A549 (cell line): ENCODE measurements at regions of chr9 and their contacts with region 1.

Region 1: DNA sequence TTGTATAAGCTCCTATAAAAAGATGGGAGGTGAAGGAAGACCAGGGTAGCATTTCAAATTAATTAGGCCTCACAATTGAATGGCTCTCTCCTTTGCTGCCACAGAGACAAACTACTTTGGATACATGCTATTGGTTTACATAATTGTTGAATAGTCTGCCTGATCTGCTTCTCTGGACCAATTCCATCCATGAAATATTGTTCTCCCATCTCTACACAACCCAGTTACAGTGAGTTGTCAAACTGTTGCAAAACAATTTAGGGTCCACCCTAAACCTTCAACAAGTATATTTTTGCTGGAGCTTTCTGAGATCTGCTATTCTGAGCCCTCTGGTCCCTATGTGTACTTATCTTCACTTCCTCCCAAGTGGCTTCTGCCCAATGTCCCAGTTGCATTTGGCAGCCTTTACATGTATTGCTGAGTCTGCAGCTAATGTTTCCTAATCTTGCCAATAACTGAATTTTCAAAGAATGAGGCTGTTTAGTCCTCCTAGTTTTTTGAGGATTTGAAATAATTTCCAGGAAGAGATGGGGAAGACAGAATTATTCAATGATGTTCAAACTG is 38.9 kb downstream of the AGTPBP1 start:
- DNase-seq: no peak
- ATAC-seq: no peak
- H3K4me3 ChIP-seq: no peak overlapping the region
- H3K27ac ChIP-seq: no peak overlapping the region
- H3K4me1 ChIP-seq: peaks cover 3% of the 10 kb centered on the region; the same call in 1 of the 3 replicates
- CTCF ChIP-seq: no peak
- EP300 ChIP-seq: no peak
- POLR2A ChIP-seq: no peak
- RAD21 ChIP-seq: no peak

Region 2: DNA sequence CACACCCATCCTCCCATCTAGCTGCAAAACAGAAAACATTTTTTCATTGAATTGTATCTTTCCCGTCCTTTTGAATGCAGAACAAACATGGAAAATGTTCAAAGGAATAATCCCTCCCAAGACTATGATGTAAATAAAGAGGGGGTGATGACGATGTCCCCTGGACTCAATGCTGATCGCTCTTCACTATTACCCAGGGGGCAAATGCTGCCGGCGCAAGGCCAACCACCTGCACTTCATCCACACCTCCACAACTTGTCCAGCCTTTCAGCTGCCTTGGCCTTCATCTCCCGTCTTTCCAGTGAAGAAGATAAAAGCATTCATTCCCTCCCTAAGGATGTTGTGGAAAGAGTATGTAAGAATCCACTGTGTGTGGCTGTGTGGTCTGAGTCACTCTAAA is 201.4 kb before region 1 on chr9:
- CTCF ChIA-PET with region 1: no interaction called
- POLR2A ChIA-PET with region 1: no interaction called
- DNase-seq: no peak
- ATAC-seq: no peak
- H3K4me3 ChIP-seq: no peak overlapping the region
- H3K27ac ChIP-seq: no peak overlapping the region
- H3K4me1 ChIP-seq: no peaks in the 10 kb centered on the region
- CTCF ChIP-seq: no peak
- EP300 ChIP-seq: no peak
- POLR2A ChIP-seq: no peak
- RAD21 ChIP-seq: no peak

Region 3: DNA sequence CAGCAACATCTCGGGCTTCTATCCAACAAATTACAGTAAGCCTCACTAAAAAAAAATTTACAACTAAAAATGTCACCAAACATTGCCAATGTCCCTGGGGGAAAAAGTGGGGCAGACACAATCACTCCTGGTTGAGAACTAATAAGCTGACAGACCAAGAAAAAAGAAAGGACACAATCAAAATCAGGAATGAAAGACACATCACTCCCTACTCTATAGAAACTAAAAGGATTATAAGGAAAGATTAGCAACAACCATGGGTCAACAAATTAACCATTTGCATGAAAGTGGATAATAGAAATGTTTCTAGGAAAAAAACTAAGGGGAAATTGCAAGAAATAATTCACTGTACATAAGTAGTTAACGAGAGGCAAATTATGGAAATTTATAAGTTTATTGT is 14.4 kb before region 1 on chr9:
- CTCF ChIA-PET with region 1: interaction called, 15 read pairs
- POLR2A ChIA-PET with region 1: interaction called, 3 read pairs
- DNase-seq: no peak
- ATAC-seq: no peak
- H3K4me3 ChIP-seq: no peak overlapping the region
- H3K27ac ChIP-seq: no peak overlapping the region
- H3K4me1 ChIP-seq: no peaks in the 10 kb centered on the region
- CTCF ChIP-seq: no peak
- EP300 ChIP-seq: no peak
- POLR2A ChIP-seq: no peak
- RAD21 ChIP-seq: no peak

Region 4: DNA sequence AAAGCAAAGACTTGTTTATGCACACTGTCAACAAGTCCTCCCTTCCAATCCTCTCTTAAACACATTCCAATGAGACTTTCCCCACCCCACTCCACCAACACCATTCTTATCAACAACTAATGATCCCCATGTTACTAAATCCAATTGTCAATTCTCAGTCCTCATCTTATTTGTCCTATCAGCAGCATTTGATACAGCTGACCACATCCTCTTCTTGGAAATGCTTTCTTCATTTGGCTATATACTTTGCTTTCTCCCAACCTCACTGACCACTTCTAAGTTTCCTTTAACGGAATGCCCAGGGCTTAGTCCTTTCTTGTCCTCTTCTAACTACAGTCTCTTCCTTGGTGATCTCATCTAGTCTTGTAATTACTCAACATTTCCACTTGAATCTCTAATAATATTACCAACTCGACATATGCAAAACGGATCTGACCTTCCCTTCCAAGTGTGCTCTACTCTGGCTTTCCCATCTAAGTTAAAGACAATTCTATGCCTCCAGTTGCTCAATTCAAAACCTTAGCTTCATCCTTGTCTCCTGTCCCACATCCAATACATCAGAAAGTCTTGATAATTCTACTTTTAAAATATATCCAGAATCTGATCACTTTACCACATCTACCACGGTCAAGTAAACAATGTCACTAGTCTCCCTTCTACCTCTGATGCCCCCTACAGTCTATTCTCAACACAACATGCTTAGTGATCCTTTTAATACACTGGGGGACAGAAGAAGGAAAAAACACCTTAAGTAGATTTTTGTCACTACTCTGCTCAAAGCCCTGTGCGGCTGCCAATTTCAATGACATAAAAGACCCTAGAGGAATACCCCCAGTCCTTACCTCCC is 13.4 kb after region 1 on chr9:
- CTCF ChIA-PET with region 1: interaction called, 13 read pairs
- POLR2A ChIA-PET with region 1: no interaction called
- DNase-seq: no peak
- ATAC-seq: peak; percentile 54; a peak in 2 of 6 replicates
- H3K4me3 ChIP-seq: no peak overlapping the region
- H3K27ac ChIP-seq: no peak overlapping the region
- H3K4me1 ChIP-seq: no peaks in the 10 kb centered on the region
- CTCF ChIP-seq: 0 out of 3 replicates have a peak, but pooled peaks have one; percentile 9
- EP300 ChIP-seq: no peak
- POLR2A ChIP-seq: no peak
- RAD21 ChIP-seq: no peak

Region 5: GRCh38 chr9:85741875-85742629 is 39.2 kb after region 1 on chr9 and contains the start of gene AGTPBP1:
- CTCF ChIA-PET with region 1: interaction called, 20 read pairs
- POLR2A ChIA-PET with region 1: interaction called, 5 read pairs
- DNase-seq: peak; percentile 64 to 93
- ATAC-seq: peak; percentile 81 to 92
- H3K4me3 ChIP-seq: peak within 1 kb of the TSS; percentile 96
- H3K27ac ChIP-seq: peak within 1 kb of the TSS; percentile 90
- H3K4me1 ChIP-seq: peaks cover 38% of the 10 kb centered on the region
- CTCF ChIP-seq: no peak
- EP300 ChIP-seq: no peak
- POLR2A ChIP-seq: peak; percentile 24
- RAD21 ChIP-seq: no peak
- polyA plus RNA-seq, gene AGTPBP1: 14.1 and 18.8 TPM in 2 replicates